ENCODE measurements at regions of chr16 and their contacts with region 1.

Region 1: DNA sequence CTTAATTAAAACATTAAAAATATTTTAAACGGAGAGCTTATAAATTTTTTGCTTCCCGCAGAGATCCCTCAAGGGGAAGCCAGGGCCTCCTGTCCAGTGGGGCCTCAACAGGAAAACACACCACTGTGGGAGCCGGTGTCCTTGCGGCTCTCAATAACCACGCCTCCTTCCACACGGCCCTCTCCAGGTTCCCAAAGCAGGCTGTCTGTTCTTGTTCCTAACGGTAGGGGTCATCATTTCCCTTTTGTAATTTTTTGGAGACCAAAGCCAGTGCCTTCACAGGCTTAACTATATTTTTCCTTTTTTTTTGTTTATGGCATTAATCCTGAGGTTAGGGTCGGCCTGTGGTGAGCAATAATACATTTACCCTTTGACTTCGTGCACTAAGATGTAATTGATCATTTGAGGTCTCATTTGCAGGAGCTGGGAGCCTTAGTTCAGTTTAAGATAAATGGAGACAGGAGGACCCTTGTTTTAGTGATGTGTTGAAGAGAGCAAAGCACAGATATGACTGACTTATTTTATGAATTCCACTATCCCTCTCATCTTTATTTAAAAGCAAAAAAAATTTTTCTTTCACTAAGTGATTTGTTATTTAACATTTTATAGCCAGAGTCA is 77.5 kb upstream of the N4BP1 start:
- DNase-seq: peak; percentile 12 to 52 (median 23)
- H3K4me3 ChIP-seq: no peak overlapping the region
- H3K27ac ChIP-seq: no peak overlapping the region
- H3K4me1 ChIP-seq: no peaks in the 10 kb centered on the region
- H3K27me3 ChIP-seq: no peaks in the 10 kb centered on the region
- CTCF ChIP-seq: peak in 1 of 3 donors; percentile 54
- EP300 ChIP-seq: no peak
- POLR2A ChIP-seq: no peak

Region 2: DNA sequence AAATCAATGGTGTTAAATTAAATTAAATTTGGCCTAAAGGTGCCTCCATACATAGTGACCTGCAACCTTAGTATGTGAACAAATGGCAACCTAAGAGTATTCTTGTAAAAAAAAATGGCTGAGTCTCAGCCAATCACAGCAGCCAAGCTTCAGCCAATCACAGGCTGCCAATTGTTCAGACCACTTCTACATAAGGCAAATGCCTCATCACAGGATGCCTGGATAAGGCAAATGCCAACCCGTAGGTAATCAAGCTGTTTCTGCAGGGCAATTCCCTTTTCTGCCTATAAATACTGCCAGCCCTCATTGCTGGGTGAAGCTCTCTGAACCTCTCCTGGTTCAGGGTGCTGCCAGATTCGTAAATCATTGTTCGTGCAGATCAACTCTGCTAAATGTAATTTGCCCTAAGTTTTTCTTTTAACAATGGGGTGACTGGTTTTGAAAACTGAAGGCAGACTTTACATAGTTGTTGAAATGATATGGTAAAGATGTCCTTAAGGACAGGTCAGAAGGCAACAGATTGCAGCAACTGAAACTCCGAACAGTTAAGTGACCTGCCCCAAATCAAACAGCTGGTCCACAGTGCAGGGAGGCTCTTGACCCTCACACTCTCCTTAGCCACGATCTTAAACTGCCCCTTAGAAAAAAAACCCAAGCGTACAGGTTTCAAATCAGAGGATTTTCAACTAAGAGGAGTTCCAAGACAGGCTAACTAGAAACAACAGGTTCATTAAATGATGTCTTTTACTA is 127.9 kb before region 1 on chr16:
- intact Hi-C with region 1: no loop called
- DNase-seq: no peak
- H3K4me3 ChIP-seq: no peak overlapping the region
- H3K27ac ChIP-seq: no peak overlapping the region
- H3K4me1 ChIP-seq: peaks cover 6% of the 10 kb centered on the region
- H3K27me3 ChIP-seq: no peaks in the 10 kb centered on the region
- CTCF ChIP-seq: no peak
- EP300 ChIP-seq: no peak
- POLR2A ChIP-seq: no peak

Region 3: DNA sequence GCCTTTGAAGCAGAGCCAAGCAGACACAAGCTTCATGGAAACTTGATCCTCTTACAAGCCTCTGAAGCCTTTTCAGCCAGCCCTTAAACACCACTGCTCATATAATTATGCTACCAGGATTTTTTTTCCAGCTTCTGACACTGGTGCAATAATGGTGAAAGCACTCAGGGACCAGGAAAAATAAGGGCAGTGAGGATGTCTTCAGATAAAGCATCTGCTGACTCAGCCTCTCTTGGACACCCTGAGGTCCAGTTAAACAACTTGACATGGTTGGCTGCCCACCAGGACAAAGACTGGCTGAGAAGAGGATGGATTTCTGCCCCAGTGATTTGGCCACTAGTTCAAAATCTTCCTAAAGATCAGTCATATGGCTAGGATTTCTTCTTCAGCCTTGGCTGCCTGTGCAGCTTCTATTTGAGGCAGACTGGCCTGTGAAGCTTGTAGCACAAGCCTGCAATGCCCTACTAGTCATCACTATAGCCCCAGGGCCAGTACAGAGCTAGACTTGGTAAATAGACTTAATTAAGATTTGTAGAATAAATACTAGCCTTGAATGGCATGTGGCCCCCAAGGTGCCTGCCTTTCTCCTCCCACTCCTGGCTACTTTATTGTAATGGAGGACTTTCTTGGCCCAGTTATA is 46.8 kb after region 1 on chr16:
- intact Hi-C with region 1: no loop called
- DNase-seq: no peak
- H3K4me3 ChIP-seq: no peak overlapping the region
- H3K27ac ChIP-seq: no peak overlapping the region
- H3K4me1 ChIP-seq: no peaks in the 10 kb centered on the region
- H3K27me3 ChIP-seq: no peaks in the 10 kb centered on the region
- CTCF ChIP-seq: no peak
- EP300 ChIP-seq: no peak
- POLR2A ChIP-seq: no peak

Region 4: DNA sequence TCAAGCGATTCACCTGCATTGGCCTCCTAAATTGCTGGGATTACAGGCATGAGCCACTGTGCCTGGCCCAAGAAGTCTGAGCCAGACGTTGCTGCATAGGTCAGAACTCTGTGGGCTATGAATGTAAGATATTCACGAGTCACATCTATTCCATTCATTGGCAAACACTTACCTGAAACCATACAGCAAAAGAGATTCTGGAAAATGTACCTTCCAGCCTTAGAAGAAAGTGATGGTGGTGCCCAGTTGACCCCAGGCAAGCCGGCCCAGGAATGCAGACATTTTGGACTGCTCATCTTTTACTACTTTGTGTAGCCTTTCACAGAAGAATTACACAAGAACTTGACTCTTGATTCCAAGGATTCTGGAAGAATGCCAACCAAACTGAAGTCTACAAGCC is 58.0 kb after region 1 on chr16:
- intact Hi-C with region 1: loop called in 1 of 4 experiments (anchors 2 kb)
- DNase-seq: no peak
- H3K4me3 ChIP-seq: no peak overlapping the region
- H3K27ac ChIP-seq: no peak overlapping the region
- H3K4me1 ChIP-seq: no peaks in the 10 kb centered on the region
- H3K27me3 ChIP-seq: no peaks in the 10 kb centered on the region
- CTCF ChIP-seq: no peak
- EP300 ChIP-seq: no peak
- POLR2A ChIP-seq: no peak

Region 5: GRCh38 chr16:49348408-49349177 is 661.1 kb after region 1 on chr16:
- intact Hi-C with region 1: loop called in 1 of 4 experiments (anchors 5 kb)
- DNase-seq: no peak
- H3K4me3 ChIP-seq: no peak overlapping the region
- H3K27ac ChIP-seq: no peak overlapping the region
- H3K4me1 ChIP-seq: no peaks in the 10 kb centered on the region
- H3K27me3 ChIP-seq: no peaks in the 10 kb centered on the region
- CTCF ChIP-seq: no peak
- EP300 ChIP-seq: no peak
- POLR2A ChIP-seq: no peak